CD8-positive, alpha-beta T cell (primary cell): ENCODE measurements at regions of chr2 and their contacts with region 1.

Region 1: DNA sequence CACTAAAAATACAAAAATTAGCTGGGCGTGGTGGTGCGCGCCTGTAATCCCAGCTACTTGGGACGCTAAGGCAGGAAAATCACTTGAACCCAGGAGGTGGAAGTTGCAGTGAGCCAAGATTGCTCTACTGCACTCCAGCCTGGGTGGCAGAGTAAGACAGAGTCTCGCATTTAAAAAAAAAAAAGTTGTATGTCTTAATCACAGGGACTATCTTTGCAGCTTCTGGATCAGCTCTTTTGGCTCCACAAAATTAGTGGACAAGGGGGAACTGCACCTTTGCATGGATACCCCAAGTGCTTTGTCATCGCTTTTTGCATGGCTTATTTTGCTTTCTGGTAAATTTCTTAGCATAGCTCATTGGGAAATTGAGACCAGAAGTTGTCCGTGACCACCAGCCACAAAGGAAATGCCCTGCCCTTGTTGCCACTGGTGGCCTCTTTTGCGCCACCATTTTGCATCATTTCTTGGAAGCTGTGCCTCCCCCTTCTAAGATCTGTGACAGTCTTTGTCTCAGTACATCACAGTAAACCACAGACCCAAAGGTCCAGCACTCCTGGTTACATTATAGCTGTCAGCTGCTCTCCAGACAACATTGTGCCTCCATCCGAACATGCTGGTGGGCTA is 43.9 kb upstream of the PCBP1 start:
- DNase-seq: peak in 4 of 9 experiments; percentile 5 to 53 (median 20)
- ATAC-seq: no peak
- H3K4me3 ChIP-seq: no peak overlapping the region
- H3K4me3 Mint-ChIP-seq: peak overlapping the region; percentile 32
- H3K27ac ChIP-seq: peak overlapping the region in 1 of 2 experiments; percentile 71
- H3K27ac Mint-ChIP-seq: peak overlapping the region; percentile 90
- H3K4me1 ChIP-seq: peaks cover 16% of the 10 kb centered on the region
- H3K4me1 Mint-ChIP-seq: peaks cover 31% of the 10 kb centered on the region
- H3K27me3 ChIP-seq: no peaks in the 10 kb centered on the region
- H3K27me3 Mint-ChIP-seq: no peaks in the 10 kb centered on the region
- CTCF ChIP-seq: no peak

Region 2: DNA sequence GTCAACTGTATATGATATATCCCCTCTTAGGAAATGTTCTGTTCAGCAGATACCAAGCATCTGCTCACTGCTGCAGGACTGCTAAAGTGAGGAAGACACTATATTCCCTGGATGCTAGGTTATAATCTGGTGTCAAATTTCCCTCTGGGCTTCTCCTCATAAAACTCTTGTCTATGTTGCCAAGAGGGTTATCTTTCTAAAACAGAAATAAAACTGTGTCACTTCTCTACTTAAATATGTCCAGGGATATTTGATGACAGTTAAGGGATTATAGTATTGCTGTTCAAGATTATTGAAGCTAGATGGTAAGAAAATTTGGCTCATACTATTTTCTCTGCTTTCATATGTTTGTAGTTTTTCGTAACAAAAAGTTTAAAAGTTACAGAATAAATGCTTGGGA is 180.1 kb before region 1 on chr2:
- CTCF ChIA-PET with region 1: no interaction called
- POLR2A ChIA-PET with region 1: no interaction called
- intact Hi-C with region 1: no loop called
- DNase-seq: no peak
- ATAC-seq: no peak
- H3K4me3 ChIP-seq: no peak overlapping the region
- H3K4me3 Mint-ChIP-seq: no peak overlapping the region
- H3K27ac ChIP-seq: no peak overlapping the region
- H3K27ac Mint-ChIP-seq: no peak overlapping the region
- H3K4me1 ChIP-seq: no peaks in the 10 kb centered on the region
- H3K4me1 Mint-ChIP-seq: no peaks in the 10 kb centered on the region
- H3K27me3 ChIP-seq: no peaks in the 10 kb centered on the region
- H3K27me3 Mint-ChIP-seq: no peaks in the 10 kb centered on the region
- CTCF ChIP-seq: no peak

Region 3: GRCh38 chr2:70011786-70012185 is 31.6 kb before region 1 on chr2:
- CTCF ChIA-PET with region 1: no interaction called
- POLR2A ChIA-PET with region 1: no interaction called
- intact Hi-C with region 1: loop called in 1 of 2 experiments (anchors 1 kb)
- DNase-seq: peak in 1 of 9 experiments; percentile 19
- ATAC-seq: no peak
- H3K4me3 ChIP-seq: no peak overlapping the region
- H3K4me3 Mint-ChIP-seq: no peak overlapping the region
- H3K27ac ChIP-seq: no peak overlapping the region
- H3K27ac Mint-ChIP-seq: no peak overlapping the region
- H3K4me1 ChIP-seq: no peaks in the 10 kb centered on the region
- H3K4me1 Mint-ChIP-seq: peaks cover 2% of the 10 kb centered on the region
- H3K27me3 ChIP-seq: no peaks in the 10 kb centered on the region
- H3K27me3 Mint-ChIP-seq: no peaks in the 10 kb centered on the region
- CTCF ChIP-seq: no peak

Region 4: DNA sequence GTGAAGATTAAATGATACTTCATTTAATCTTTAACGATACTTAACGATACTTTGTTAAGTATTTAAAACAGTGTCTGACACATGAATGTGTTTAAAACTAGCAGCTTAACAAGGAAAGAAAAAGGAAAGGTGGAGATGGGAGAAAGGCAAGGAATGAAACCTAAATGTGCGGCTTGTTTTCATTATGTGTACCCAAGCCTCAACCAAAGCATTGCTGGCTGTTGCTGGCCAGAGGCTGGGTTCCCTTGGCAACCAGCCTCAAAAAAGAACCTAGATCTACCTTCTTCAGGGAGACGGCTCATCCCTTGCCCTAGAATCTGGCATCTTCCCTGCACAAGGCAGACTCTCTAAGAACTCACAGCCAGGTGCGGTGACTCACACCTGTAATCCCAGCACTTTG is 30.1 kb after region 1 on chr2:
- CTCF ChIA-PET with region 1: no interaction called
- POLR2A ChIA-PET with region 1: no interaction called
- intact Hi-C with region 1: no loop called
- DNase-seq: no peak
- ATAC-seq: no peak
- H3K4me3 ChIP-seq: no peak overlapping the region
- H3K4me3 Mint-ChIP-seq: no peak overlapping the region
- H3K27ac ChIP-seq: no peak overlapping the region
- H3K27ac Mint-ChIP-seq: peak overlapping the region; percentile 45
- H3K4me1 ChIP-seq: peaks cover 34% of the 10 kb centered on the region
- H3K4me1 Mint-ChIP-seq: peaks cover 41% of the 10 kb centered on the region
- H3K27me3 ChIP-seq: no peaks in the 10 kb centered on the region
- H3K27me3 Mint-ChIP-seq: no peaks in the 10 kb centered on the region
- CTCF ChIP-seq: no peak